Natural killer cell (primary cell): ENCODE measurements at regions of chr19 and their contacts with region 1.

Region 1: GRCh38 chr19:53553884-53554791 is 16.2 kb downstream of the ZNF331 start:
- DNase-seq: peak; percentile 89 to 97
- ATAC-seq: peak; percentile 81 to 90 (median 82)
- H3K4me3 ChIP-seq: peak overlapping the region; percentile 51
- H3K4me3 Mint-ChIP-seq: peak overlapping the region; percentile 98
- H3K27ac ChIP-seq: peak overlapping the region; percentile 84
- H3K27ac Mint-ChIP-seq: peak overlapping the region; percentile 99 to 100
- H3K4me1 ChIP-seq: peaks cover 17% of the 10 kb centered on the region
- H3K4me1 Mint-ChIP-seq: peaks cover 8 to 14% of the 10 kb centered on the region in 2 donors
- H3K27me3 ChIP-seq: no peaks in the 10 kb centered on the region
- H3K27me3 Mint-ChIP-seq: no peaks in the 10 kb centered on the region
- CTCF ChIP-seq: no peak

Region 2: DNA sequence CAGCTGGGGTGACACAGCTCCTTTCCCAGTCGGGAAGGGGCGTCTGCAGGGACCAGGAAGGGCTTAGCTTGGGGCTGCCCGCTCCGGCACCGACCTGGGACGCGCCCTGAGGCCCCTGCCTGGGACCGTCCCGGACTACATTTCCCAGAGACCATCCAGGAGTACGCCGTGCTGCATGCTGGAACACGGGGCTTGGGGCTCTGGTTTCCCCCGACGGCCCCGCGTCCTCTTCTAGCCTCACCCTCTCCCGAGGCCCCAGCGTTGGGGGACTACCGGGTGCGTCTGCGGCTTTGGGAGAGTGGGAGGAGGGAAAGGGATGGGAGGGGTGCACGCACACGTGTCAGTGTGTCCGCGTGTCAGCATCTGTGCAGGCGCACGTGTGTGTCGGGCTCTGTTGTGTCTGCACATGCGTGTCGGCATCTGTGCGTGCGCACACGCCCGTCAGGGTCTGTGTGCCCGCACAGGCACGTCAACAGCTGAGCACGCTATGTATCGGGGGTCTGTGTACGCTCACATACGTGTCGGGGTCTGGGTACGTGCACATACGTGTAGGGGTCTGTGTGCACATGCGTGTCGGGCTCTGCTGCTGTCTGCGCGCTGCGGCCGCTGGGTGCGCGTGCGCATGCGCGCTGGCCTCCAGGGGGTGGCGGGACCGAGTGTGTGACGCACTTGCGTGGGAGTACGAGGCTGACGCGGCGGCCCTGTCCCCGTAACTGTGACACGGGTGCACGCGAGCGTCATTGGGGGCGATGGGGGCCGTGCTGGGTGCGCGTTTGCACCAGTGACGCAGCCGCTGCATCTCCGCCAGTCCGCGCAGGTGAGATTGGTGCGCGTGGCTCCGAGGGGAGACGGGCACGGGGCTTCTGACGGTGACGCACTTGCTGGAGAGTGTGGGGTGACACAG is 16.4 kb before region 1 on chr19 and contains the start of gene ZNF331:
- intact Hi-C with region 1: loop called (anchors 1 kb)
- DNase-seq: peak; percentile 87 to 96
- ATAC-seq: peak; percentile 80 to 90 (median 83)
- H3K4me3 ChIP-seq: peak within 1 kb of the TSS; percentile 59
- H3K4me3 Mint-ChIP-seq: peak within 1 kb of the TSS; percentile 98
- H3K27ac ChIP-seq: peak within 1 kb of the TSS; percentile 88
- H3K27ac Mint-ChIP-seq: peak within 1 kb of the TSS; percentile 98 to 99
- H3K4me1 ChIP-seq: peaks cover 14% of the 10 kb centered on the region
- H3K4me1 Mint-ChIP-seq: peaks cover 18 to 20% of the 10 kb centered on the region in 2 donors
- H3K27me3 ChIP-seq: no peaks in the 10 kb centered on the region
- H3K27me3 Mint-ChIP-seq: no peaks in the 10 kb centered on the region
- CTCF ChIP-seq: no peak
- total RNA-seq, gene ZNF331: 153 to 245 (median 204) TPM